ENCODE measurements at regions of chr1 and their contacts with region 1.

Region 1: GRCh38 chr1:91273875-91274274 is 130.8 kb downstream of the HFM1 start:
- DNase-seq: no peak
- H3K4me3 ChIP-seq: no peak overlapping the region
- H3K27ac ChIP-seq: no peak overlapping the region
- H3K4me1 ChIP-seq: no peaks in the 10 kb centered on the region
- H3K27me3 ChIP-seq: no peaks in the 10 kb centered on the region
- CTCF ChIP-seq: no peak

Region 2: GRCh38 chr1:91244737-91245136 is 29.1 kb before region 1 on chr1:
- intact Hi-C with region 1: no loop called
- DNase-seq: no peak
- H3K4me3 ChIP-seq: no peak overlapping the region
- H3K27ac ChIP-seq: no peak overlapping the region
- H3K4me1 ChIP-seq: no peaks in the 10 kb centered on the region
- H3K27me3 ChIP-seq: no peaks in the 10 kb centered on the region
- CTCF ChIP-seq: no peak

Region 3: GRCh38 chr1:91872560-91873081 is 598.7 kb after region 1 on chr1:
- intact Hi-C with region 1: loop called (anchors 5 kb)
- DNase-seq: no peak
- H3K4me3 ChIP-seq: no peak overlapping the region
- H3K27ac ChIP-seq: no peak overlapping the region
- H3K4me1 ChIP-seq: peaks cover 0 to 29% (median 5%) of the 10 kb centered on the region in 4 donors
- H3K27me3 ChIP-seq: no peaks in the 10 kb centered on the region
- CTCF ChIP-seq: no peak

Measured in tibial artery (tissue), 4 donors.